CD4-positive, alpha-beta memory T cell (primary cell): ENCODE measurements at regions of chr16 and their contacts with region 1.

Region 1: GRCh38 chr16:84617791-84618580 is at the start of gene COTL1:
- DNase-seq: peak; percentile 91 to 94 (median 91)
- H3K4me3 ChIP-seq: peak within 1 kb of the TSS; percentile 71 to 91
- H3K4me3 Mint-ChIP-seq: peak within 1 kb of the TSS; percentile 95 to 97 (median 96)
- H3K27ac ChIP-seq: peak within 1 kb of the TSS; percentile 64
- H3K27ac Mint-ChIP-seq: peak within 1 kb of the TSS; percentile 90 to 97 (median 94)
- H3K4me1 ChIP-seq: peaks cover 39% of the 10 kb centered on the region
- H3K4me1 Mint-ChIP-seq: peaks cover 35 to 53% (median 45%) of the 10 kb centered on the region in 4 donors
- H3K27me3 ChIP-seq: no peaks in the 10 kb centered on the region
- H3K27me3 Mint-ChIP-seq: no peaks in the 10 kb centered on the region
- total RNA-seq, gene COTL1: 181 to 186 TPM

Region 2: GRCh38 chr16:84511180-84511824 is 106.7 kb before region 1 on chr16:
- CTCF ChIA-PET with region 1: interaction called, 358 read pairs
- POLR2A ChIA-PET with region 1: interaction called, 113 read pairs
- intact Hi-C with region 1: loop called (anchors 1 kb)
- DNase-seq: peak; percentile 56 to 84 (median 82)
- H3K4me3 ChIP-seq: no peak overlapping the region
- H3K4me3 Mint-ChIP-seq: peak overlapping the region in 7 of 8 donors; percentile 2 to 73 (median 43)
- H3K27ac ChIP-seq: no peak overlapping the region
- H3K27ac Mint-ChIP-seq: peak overlapping the region; percentile 82 to 96 (median 91)
- H3K4me1 ChIP-seq: peaks cover 84% of the 10 kb centered on the region
- H3K4me1 Mint-ChIP-seq: peaks cover 51 to 78% (median 67%) of the 10 kb centered on the region in 4 donors
- H3K27me3 ChIP-seq: no peaks in the 10 kb centered on the region
- H3K27me3 Mint-ChIP-seq: no peaks in the 10 kb centered on the region

Region 3: GRCh38 chr16:84555418-84556195 is 62.4 kb before region 1 on chr16:
- CTCF ChIA-PET with region 1: interaction called, 13 read pairs
- POLR2A ChIA-PET with region 1: interaction called, 88 read pairs
- intact Hi-C with region 1: loop called (anchors 1 kb)
- DNase-seq: no peak
- H3K4me3 ChIP-seq: no peak overlapping the region
- H3K4me3 Mint-ChIP-seq: peak overlapping the region in 2 of 8 donors; percentile 11 to 24
- H3K27ac ChIP-seq: no peak overlapping the region
- H3K27ac Mint-ChIP-seq: peak overlapping the region in 5 of 7 donors; percentile 55 to 87 (median 86)
- H3K4me1 ChIP-seq: peaks cover 49% of the 10 kb centered on the region
- H3K4me1 Mint-ChIP-seq: peaks cover 30 to 51% (median 42%) of the 10 kb centered on the region in 4 donors
- H3K27me3 ChIP-seq: no peaks in the 10 kb centered on the region
- H3K27me3 Mint-ChIP-seq: no peaks in the 10 kb centered on the region

Region 4: GRCh38 chr16:84599521-84600202 is 18.3 kb before region 1 on chr16:
- CTCF ChIA-PET with region 1: interaction called, 45 read pairs
- POLR2A ChIA-PET with region 1: interaction called, 530 read pairs
- intact Hi-C with region 1: loop called (anchors 1 kb)
- DNase-seq: peak in 4 of 5 donors; percentile 37 to 72 (median 48)
- H3K4me3 ChIP-seq: peak overlapping the region; percentile 57
- H3K4me3 Mint-ChIP-seq: peak overlapping the region; percentile 82 to 92 (median 88)
- H3K27ac ChIP-seq: peak overlapping the region; percentile 89
- H3K27ac Mint-ChIP-seq: peak overlapping the region; percentile 94 to 98 (median 95)
- H3K4me1 ChIP-seq: peaks cover 97% of the 10 kb centered on the region
- H3K4me1 Mint-ChIP-seq: peaks cover 72 to 96% (median 84%) of the 10 kb centered on the region in 4 donors
- H3K27me3 ChIP-seq: no peaks in the 10 kb centered on the region
- H3K27me3 Mint-ChIP-seq: no peaks in the 10 kb centered on the region

Region 5: DNA sequence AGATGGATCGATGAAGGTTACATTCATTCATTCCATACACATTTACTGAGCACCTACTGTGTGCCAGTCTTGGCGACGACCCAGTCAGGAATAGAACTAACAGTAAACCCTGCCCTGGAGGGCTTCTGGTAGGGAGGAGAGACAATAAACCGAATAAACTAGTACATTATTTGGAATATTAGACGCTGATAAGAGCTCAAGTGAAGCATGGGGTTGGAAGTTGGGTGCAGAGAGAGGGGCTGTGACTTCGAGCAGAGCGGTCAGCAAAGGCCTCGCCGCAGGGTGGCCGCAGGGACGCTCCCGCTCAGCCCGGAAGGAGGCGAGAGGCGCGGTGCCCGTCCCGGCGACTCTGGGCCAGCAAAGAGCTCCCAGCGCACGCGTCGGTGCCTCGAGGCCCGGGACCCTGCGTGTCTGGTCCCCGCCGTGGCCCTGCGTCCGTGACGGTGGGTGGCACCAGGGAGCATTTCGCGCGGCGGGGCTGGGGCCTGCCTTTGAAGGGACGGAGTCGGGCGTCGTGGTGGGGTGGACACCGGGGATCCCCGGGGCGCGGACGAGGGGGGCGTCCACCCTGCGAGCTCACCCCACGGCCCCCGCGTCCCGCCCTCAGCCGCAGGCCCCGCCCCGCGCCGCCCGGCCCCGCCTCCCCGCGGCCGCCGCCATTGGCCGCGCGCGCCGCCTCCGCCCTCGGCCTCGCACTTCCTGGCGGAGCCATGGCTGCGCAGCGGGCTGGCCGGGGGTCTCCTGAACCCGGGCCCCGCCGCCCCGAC is 30.0 kb after region 1 on chr16 and contains the start of gene KLHL36:
- CTCF ChIA-PET with region 1: interaction called, 4 read pairs
- POLR2A ChIA-PET with region 1: interaction called, 13 read pairs
- intact Hi-C with region 1: loop called (anchors 5 kb)
- DNase-seq: peak; percentile 68 to 76 (median 72)
- H3K4me3 ChIP-seq: peak within 1 kb of the TSS; percentile 32 to 75
- H3K4me3 Mint-ChIP-seq: peak within 1 kb of the TSS; percentile 86 to 96 (median 94)
- H3K27ac ChIP-seq: peak within 1 kb of the TSS; percentile 62
- H3K27ac Mint-ChIP-seq: peak within 1 kb of the TSS; percentile 86 to 97 (median 96)
- H3K4me1 ChIP-seq: peaks cover 47% of the 10 kb centered on the region
- H3K4me1 Mint-ChIP-seq: peaks cover 30 to 53% (median 41%) of the 10 kb centered on the region in 4 donors
- H3K27me3 ChIP-seq: no peaks in the 10 kb centered on the region
- H3K27me3 Mint-ChIP-seq: no peaks in the 10 kb centered on the region
- total RNA-seq, gene KLHL36: 131 to 149 TPM

Region 6: DNA sequence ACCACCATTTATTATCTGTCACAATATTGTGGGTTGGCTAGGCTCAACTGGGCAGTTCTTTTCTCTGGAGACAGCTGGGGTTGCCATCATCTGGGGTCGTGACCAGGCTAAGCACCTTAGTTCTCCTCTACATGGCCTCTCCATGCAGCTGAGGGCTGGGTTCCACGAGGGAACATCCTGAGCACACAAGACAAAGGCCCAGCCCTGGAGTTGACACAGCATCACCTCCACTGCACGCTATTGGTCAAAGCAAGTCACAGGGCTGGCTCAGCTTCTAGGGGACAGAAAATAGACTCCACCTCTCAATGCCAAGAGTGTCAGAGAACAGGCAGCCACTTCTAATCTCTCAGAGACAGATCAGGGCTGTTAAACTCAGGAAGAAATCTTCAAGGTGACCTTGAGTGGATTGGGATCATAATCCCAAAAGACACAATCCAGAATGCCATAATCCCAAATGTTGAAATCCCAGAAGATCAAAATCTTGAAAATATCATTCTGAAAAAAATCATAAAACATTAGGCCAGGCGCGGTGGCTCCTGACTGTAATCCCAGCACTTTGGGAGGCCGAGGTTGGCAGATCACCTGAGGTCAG is 68.8 kb after region 1 on chr16:
- CTCF ChIA-PET with region 1: no interaction called
- POLR2A ChIA-PET with region 1: no interaction called
- intact Hi-C with region 1: no loop called
- DNase-seq: no peak
- H3K4me3 ChIP-seq: no peak overlapping the region
- H3K4me3 Mint-ChIP-seq: no peak overlapping the region
- H3K27ac ChIP-seq: no peak overlapping the region
- H3K27ac Mint-ChIP-seq: no peak overlapping the region
- H3K4me1 ChIP-seq: no peaks in the 10 kb centered on the region
- H3K4me1 Mint-ChIP-seq: peaks cover 0 to 3% (median 0%) of the 10 kb centered on the region in 4 donors
- H3K27me3 ChIP-seq: no peaks in the 10 kb centered on the region
- H3K27me3 Mint-ChIP-seq: peaks cover 6 to 12% of the 10 kb centered on the region in 2 donors

Region 7: GRCh38 chr16:84836234-84836647 is 218.3 kb after region 1 on chr16:
- CTCF ChIA-PET with region 1: no interaction called
- POLR2A ChIA-PET with region 1: no interaction called
- intact Hi-C with region 1: no loop called
- DNase-seq: no peak
- H3K4me3 ChIP-seq: no peak overlapping the region
- H3K4me3 Mint-ChIP-seq: no peak overlapping the region
- H3K27ac ChIP-seq: no peak overlapping the region
- H3K27ac Mint-ChIP-seq: no peak overlapping the region
- H3K4me1 ChIP-seq: no peaks in the 10 kb centered on the region
- H3K4me1 Mint-ChIP-seq: peaks cover 0 to 4% (median 1%) of the 10 kb centered on the region in 4 donors
- H3K27me3 ChIP-seq: no peaks in the 10 kb centered on the region
- H3K27me3 Mint-ChIP-seq: peaks cover 5 to 16% of the 10 kb centered on the region in 2 donors